ENCODE measurements at regions of chr3 and their contacts with region 1.

Region 1: DNA sequence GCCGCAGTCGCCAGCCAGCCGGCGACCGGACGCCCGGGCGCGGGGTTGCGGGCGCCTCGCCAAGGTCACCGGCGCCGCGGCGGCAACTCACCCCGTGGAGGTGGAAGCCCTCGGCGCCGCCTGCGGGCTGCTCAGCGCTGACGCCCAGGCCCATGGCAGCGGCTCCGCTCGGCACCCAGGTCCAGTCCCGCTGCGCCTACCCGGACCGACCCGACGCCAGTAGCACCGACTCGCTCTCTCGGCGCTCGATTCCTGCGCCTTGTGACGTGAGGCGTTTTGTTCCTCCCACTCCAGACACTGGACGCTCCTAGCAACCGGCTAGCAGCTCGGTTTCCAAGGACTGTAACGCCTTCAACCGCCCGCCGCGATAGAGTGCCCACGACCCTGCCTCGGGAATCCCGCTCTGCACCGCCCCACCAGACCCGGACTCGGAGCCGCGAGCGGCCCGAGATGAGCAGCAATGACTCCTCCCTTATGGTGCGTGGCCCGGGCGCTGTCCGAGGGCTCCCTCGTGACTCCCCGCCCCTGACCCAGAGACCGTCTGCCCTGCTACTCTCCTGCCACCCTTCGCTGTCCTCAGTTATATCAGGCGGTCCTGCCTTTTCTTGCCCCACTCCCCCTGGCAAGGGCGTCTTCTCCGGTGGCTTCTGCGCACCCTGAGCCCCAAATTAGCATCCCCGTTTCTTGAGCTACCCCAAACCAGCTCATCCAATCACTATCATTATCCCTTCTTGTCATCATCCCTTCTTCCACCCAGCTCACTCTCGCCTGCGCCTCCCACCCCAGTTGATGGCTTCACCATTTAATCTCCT is at the starts of genes GORASP1 and TTC21A:
- DNase-seq: no peak
- H3K4me3 ChIP-seq: peak within 1 kb of the TSS; percentile 89
- CTCF ChIP-seq: no peak

Region 2: DNA sequence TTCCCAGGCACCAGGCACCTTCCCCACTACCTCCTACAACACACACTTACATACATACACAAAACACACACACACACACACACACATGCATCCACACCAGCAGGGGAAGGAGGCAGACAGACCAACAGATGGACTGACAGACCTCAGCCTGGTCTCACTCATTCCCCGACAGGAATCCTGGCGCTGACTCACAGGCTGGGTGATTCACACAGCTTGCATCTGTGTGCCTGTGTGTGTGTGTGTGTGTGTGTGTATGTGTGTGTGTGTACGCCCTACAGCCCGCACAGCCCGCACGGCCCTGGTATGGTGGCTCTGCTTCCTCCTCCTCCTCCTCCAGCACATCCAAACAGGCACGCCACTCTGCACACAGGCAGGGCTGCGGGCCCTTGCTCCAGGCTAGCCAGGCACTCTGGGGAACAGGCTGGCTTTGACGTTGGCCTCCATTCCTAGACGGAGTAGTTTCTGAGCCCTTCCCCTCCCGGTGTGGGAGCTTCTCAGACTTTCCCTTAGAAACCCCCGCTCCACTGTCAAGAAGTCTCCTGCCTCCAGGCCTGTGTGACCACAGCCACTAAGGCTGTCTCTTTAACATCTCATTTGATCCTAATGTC is 39.5 kb after region 1 on chr3:
- CTCF ChIA-PET with region 1: no interaction called
- POLR2A ChIA-PET with region 1: interaction called, 12 read pairs
- DNase-seq: peak; percentile 98
- H3K4me3 ChIP-seq: peak overlapping the region; percentile 32
- CTCF ChIP-seq: no peak